Ascending aorta (tissue), 2 donors: ENCODE measurements at regions of chr22 and their contacts with region 1.

Region 1: GRCh38 chr22:37561212-37562048 is 1.1 kb downstream of the CDC42EP1 start:
- DNase-seq: peak; percentile 79 to 97
- H3K4me3 ChIP-seq: peak overlapping the region; percentile 84 to 95
- H3K27ac ChIP-seq: peak overlapping the region; percentile 98 to 99
- H3K4me1 ChIP-seq: peaks cover 39 to 52% of the 10 kb centered on the region in 2 donors
- H3K27me3 ChIP-seq: no peaks in the 10 kb centered on the region
- CTCF ChIP-seq: peak; percentile 81 to 91 (median 84)

Region 2: GRCh38 chr22:37608477-37609239 is 47.2 kb after region 1 on chr22 and contains the start of gene GGA1:
- intact Hi-C with region 1: loop called (anchors 1 kb)
- DNase-seq: peak; percentile 94 to 97
- H3K4me3 ChIP-seq: peak within 1 kb of the TSS; percentile 79 to 81
- H3K27ac ChIP-seq: peak within 1 kb of the TSS; percentile 92 to 94
- H3K4me1 ChIP-seq: peaks cover 5 to 37% of the 10 kb centered on the region in 2 donors
- H3K27me3 ChIP-seq: no peaks in the 10 kb centered on the region
- CTCF ChIP-seq: peak in 1 of 3 experiments; percentile 13
- total RNA-seq, gene GGA1: 53.5 TPM